Vagina (tissue), 2 donors: ENCODE measurements at regions of chr10 and their contacts with region 1.

Region 1: DNA sequence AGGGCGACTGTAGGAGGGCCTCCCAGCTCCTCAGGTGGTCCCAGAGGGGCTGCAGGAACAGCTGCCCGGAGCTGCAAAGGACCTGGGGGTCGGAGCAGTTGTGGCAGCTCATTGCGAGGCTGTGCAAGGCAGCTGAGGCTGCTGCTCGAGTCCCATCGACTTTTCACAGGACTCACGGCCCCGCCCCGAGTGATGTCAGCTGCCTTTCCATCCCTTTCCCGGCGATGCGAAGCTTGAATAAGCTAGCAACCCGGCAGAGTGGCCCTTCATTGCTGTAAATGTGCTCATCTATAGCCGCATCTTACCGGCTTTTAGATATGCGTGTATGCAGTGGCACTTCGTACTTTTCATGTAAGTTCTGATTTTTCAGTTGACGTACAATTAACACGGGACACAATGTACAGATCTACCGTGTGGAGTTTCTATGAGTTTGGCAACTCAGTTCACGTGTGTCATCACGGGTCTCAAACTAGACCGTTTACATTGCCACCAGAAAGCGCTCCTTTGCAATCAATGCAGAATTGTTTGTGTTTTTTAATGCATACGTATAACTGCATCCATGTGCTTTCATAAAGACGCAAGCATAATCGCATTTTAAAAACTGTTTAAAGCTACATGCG is at the start of gene CH25H:
- DNase-seq: peak in 1 of 2 donors; percentile 92
- H3K4me3 ChIP-seq: peak within 1 kb of the TSS; percentile 62 to 64
- H3K27ac ChIP-seq: peak within 1 kb of the TSS; percentile 85
- H3K4me1 ChIP-seq: peaks cover 19% of the 10 kb centered on the region
- H3K27me3 ChIP-seq: no peaks in the 10 kb centered on the region
- CTCF ChIP-seq: no peak
- POLR2A ChIP-seq: peak in 1 of 2 donors; percentile 62
- total RNA-seq, gene CH25H: 0.74 TPM

Region 2: DNA sequence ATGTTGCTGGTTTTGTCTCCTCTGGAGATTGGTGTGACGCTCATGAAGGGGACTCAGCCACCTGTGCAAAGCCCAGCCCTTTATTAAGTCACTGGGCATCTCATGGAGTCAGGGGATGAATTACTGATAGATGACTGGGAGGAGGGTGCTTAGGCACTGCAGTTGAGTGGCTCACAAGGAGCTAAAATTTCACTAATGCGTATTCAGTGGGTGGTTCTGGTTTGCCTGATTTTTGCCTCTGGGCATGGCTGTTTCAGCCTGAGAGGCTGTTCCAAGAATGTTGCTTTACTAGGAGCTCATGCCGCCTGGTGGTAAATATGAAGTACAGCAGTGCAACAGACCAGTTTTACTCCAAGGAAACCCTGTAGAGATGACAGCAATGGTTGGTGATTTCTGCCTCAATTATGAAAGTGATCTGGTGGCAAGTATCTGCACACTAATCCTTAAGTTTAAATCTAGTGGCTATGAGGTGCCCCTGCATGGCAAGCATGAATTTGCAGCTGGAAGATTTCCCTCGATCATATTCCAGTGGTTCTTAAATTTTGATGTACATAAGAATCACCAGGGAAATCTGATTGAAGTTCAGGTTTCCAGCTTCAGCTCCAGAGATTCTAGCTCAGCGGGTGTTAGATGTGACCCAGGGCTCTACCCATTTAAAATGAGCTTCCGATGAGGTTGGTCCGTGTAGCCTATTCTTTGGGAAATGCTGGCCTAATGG is 274.6 kb before region 1 on chr10:
- intact Hi-C with region 1: loop called (anchors 5 kb)
- DNase-seq: no peak
- H3K4me3 ChIP-seq: no peak overlapping the region
- H3K27ac ChIP-seq: peak overlapping the region; percentile 61
- H3K4me1 ChIP-seq: peaks cover 26% of the 10 kb centered on the region
- H3K27me3 ChIP-seq: no peaks in the 10 kb centered on the region
- CTCF ChIP-seq: peak; percentile 86 to 99 (median 97)
- POLR2A ChIP-seq: no peak

Region 3: DNA sequence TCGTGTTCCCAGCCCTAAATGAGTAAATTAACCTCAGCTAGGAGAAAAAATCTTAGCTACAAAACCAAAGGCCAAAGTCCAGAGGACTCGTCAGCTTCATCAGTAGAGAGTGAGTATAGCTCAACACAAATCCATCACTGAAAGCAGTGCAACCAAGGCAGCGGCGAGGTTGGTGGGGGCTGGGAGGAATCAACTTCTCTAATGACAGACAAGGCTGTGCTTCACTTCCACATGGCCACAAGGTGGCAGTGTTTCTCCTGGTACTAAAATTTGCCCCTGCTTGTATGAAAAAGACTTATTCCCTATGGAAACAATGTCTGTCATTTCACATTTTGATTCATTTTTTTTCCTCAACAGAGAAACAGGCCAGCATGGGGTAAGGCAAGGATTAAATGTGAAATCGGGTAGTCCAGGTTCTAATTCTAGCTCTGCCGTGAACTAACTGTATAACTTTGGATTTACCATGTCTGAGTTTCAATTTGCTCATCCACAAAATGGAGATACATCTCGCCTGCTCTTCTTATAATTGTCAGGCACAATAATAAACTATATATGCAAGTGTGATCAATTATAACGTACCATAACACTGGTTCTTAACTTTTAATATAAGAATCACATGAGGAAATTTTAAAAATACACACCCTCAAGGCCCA is 177.4 kb before region 1 on chr10:
- intact Hi-C with region 1: loop called (anchors 2 kb)
- DNase-seq: no peak
- H3K4me3 ChIP-seq: no peak overlapping the region
- H3K27ac ChIP-seq: peak overlapping the region; percentile 45
- H3K4me1 ChIP-seq: peaks cover 16% of the 10 kb centered on the region
- H3K27me3 ChIP-seq: no peaks in the 10 kb centered on the region
- CTCF ChIP-seq: peak; percentile 91 to 95 (median 94)
- POLR2A ChIP-seq: no peak